Activated naive CD4-positive, alpha-beta T cell treated with anti-CD3 and anti-CD28 coated beads for 36 hours (primary cell): ENCODE measurements at regions of chr7 and their contacts with region 1.

Region 1: GRCh38 chr7:24587848-24588247 is 14.6 kb downstream of the PALS2 start:
- DNase-seq: peak; percentile 64
- H3K4me3 Mint-ChIP-seq: no peak overlapping the region
- H3K27ac Mint-ChIP-seq: no peak overlapping the region
- H3K4me1 Mint-ChIP-seq: peaks cover 34% of the 10 kb centered on the region
- H3K27me3 Mint-ChIP-seq: no peaks in the 10 kb centered on the region

Region 2: GRCh38 chr7:23863209-23863798 is 724.5 kb before region 1 on chr7:
- CTCF ChIA-PET with region 1: no interaction called
- intact Hi-C with region 1: loop called (anchors 10 kb)
- DNase-seq: peak; percentile 46
- H3K4me3 Mint-ChIP-seq: no peak overlapping the region
- H3K27ac Mint-ChIP-seq: no peak overlapping the region
- H3K4me1 Mint-ChIP-seq: no peaks in the 10 kb centered on the region
- H3K27me3 Mint-ChIP-seq: peaks cover 8% of the 10 kb centered on the region

Region 3: GRCh38 chr7:24401628-24402593 is 185.9 kb before region 1 on chr7:
- CTCF ChIA-PET with region 1: no interaction called
- intact Hi-C with region 1: loop called (anchors 1 kb)
- DNase-seq: no peak
- H3K4me3 Mint-ChIP-seq: no peak overlapping the region
- H3K27ac Mint-ChIP-seq: no peak overlapping the region
- H3K4me1 Mint-ChIP-seq: peaks cover 7% of the 10 kb centered on the region
- H3K27me3 Mint-ChIP-seq: no peaks in the 10 kb centered on the region

Region 4: DNA sequence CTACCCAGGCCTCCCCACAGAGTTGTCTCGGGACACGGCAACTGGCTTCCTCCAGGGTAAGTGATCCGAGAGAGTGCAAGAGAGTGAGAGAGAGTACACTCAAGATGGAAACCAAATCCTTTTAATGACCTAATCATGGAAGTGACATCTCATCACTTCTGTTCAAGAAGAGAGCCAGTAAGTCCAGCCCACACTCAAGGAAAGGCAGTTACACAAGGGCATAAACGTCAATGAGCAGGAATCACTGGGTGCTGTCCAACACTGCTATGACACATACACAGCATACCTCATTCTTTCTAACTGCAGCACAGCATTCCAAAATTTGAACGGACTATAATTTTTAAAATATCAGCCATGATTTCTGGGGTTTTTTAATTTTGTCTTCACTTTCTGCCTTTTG is 421.4 kb after region 1 on chr7:
- CTCF ChIA-PET with region 1: no interaction called
- intact Hi-C with region 1: no loop called
- DNase-seq: no peak
- H3K4me3 Mint-ChIP-seq: no peak overlapping the region
- H3K27ac Mint-ChIP-seq: no peak overlapping the region
- H3K4me1 Mint-ChIP-seq: peaks cover 3% of the 10 kb centered on the region
- H3K27me3 Mint-ChIP-seq: no peaks in the 10 kb centered on the region